Sciatic nerve (tissue), 2 donors: ENCODE measurements at regions of chr17 and their contacts with region 1.

Region 1: GRCh38 chr17:61389670-61390478 is 9.8 kb upstream of the TBX2 start:
- DNase-seq: no peak
- ATAC-seq: peak; percentile 73

Region 2: GRCh38 chr17:60712675-60713074 is 677.2 kb before region 1 on chr17:
- intact Hi-C with region 1: loop called (anchors 10 kb)
- DNase-seq: no peak
- ATAC-seq: no peak

Region 3: GRCh38 chr17:61009663-61010062 is 380.2 kb before region 1 on chr17:
- intact Hi-C with region 1: loop called (anchors 10 kb)
- DNase-seq: no peak
- ATAC-seq: no peak